Activated CD4-positive, alpha-beta T cell treated with anti-CD3 and anti-CD28 coated beads, Interleukin-2, amount 10 ng/mL, durations not matched to agents 7 days and 5 days (primary cell): ENCODE measurements at regions of chr7 and their contacts with region 1.

Region 1: DNA sequence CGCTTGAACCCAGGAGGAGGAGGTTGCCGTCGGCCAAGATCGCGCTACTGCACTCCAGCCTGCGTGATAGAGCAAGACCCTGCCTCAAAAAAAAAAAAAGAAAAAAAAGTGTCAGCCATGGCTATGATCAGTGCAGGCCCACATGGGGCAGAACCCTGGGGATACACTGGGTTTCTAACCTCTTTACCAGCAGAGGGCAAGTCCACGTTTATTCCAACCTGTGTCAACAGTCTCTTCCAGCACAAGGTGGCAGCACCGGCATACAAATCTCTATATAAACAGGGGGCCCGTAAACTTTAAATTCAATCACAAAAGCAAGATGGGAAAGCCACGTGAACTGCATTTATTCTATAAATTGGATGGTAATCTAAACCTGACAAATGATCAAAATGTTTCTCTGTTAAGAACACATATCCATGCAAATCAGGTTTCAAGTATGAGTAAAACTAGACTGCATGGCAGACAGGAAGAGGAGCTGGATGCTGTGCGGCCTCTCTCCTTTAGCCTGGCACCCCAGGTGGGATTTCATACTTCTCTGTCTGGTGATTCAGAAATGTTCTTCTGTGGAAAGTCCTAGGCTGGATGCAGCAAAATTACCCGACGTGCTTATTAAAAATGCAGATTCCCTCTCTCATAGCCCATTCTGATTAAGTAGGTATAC is 60.0 kb upstream of the STEAP1B start:
- DNase-seq: peak; percentile 83
- H3K4me3 Mint-ChIP-seq: no peak overlapping the region
- H3K27ac Mint-ChIP-seq: no peak overlapping the region
- H3K4me1 Mint-ChIP-seq: peaks cover 50% of the 10 kb centered on the region
- H3K27me3 Mint-ChIP-seq: peaks cover 19% of the 10 kb centered on the region

Region 2: GRCh38 chr7:22726345-22727185 is 166.6 kb after region 1 on chr7:
- CTCF ChIA-PET with region 1: interaction called, 14 read pairs
- POLR2A ChIA-PET with region 1: no interaction called
- DNase-seq: peak; percentile 71
- H3K4me3 Mint-ChIP-seq: peak overlapping the region; percentile 60
- H3K27ac Mint-ChIP-seq: peak overlapping the region; percentile 78
- H3K4me1 Mint-ChIP-seq: peaks cover 61% of the 10 kb centered on the region
- H3K27me3 Mint-ChIP-seq: peaks cover 40% of the 10 kb centered on the region

Region 3: GRCh38 chr7:22782616-22783232 is 222.8 kb after region 1 on chr7:
- CTCF ChIA-PET with region 1: interaction called, 10 read pairs
- POLR2A ChIA-PET with region 1: interaction called, 3 read pairs
- DNase-seq: peak; percentile 81
- H3K4me3 Mint-ChIP-seq: no peak overlapping the region
- H3K27ac Mint-ChIP-seq: no peak overlapping the region
- H3K4me1 Mint-ChIP-seq: no peaks in the 10 kb centered on the region
- H3K27me3 Mint-ChIP-seq: peaks cover 14% of the 10 kb centered on the region